Caco-2 (cell line): ENCODE measurements at regions of chr11 and their contacts with region 1.

Region 1: GRCh38 chr11:111870886-111871692 is at the start of gene ALG9:
- DNase-seq: peak; percentile 89 to 94
- H3K4me3 ChIP-seq: peak within 1 kb of the TSS; percentile 94
- H3K4me3 Mint-ChIP-seq: peak within 1 kb of the TSS; percentile 91
- H3K27ac Mint-ChIP-seq: peak within 1 kb of the TSS; percentile 53
- H3K4me1 ChIP-seq: 0 out of 2 replicates have a peak, but pooled peaks cover 3% of the 10 kb centered on the region
- H3K4me1 Mint-ChIP-seq: peaks cover 16% of the 10 kb centered on the region
- H3K27me3 ChIP-seq: no peaks in the 10 kb centered on the region
- H3K27me3 Mint-ChIP-seq: no peaks in the 10 kb centered on the region
- CTCF ChIP-seq: peak; percentile 55 to 63
- total RNA-seq, gene ALG9: 55.3 and 57.4 TPM in 2 replicates

Region 2: GRCh38 chr11:111849631-111850030 is 21.5 kb before region 1 on chr11:
- CTCF ChIA-PET with region 1: interaction called, 10 read pairs
- POLR2A ChIA-PET with region 1: no interaction called
- intact Hi-C with region 1: no loop called
- DNase-seq: no peak
- H3K4me3 ChIP-seq: no peak overlapping the region
- H3K4me3 Mint-ChIP-seq: no peak overlapping the region
- H3K27ac Mint-ChIP-seq: no peak overlapping the region
- H3K4me1 ChIP-seq: no peaks in the 10 kb centered on the region
- H3K4me1 Mint-ChIP-seq: no peaks in the 10 kb centered on the region
- H3K27me3 ChIP-seq: no peaks in the 10 kb centered on the region
- H3K27me3 Mint-ChIP-seq: no peaks in the 10 kb centered on the region
- CTCF ChIP-seq: no peak